MCF 10A (cell line): ENCODE measurements at regions of chr10 and their contacts with region 1.

Region 1: DNA sequence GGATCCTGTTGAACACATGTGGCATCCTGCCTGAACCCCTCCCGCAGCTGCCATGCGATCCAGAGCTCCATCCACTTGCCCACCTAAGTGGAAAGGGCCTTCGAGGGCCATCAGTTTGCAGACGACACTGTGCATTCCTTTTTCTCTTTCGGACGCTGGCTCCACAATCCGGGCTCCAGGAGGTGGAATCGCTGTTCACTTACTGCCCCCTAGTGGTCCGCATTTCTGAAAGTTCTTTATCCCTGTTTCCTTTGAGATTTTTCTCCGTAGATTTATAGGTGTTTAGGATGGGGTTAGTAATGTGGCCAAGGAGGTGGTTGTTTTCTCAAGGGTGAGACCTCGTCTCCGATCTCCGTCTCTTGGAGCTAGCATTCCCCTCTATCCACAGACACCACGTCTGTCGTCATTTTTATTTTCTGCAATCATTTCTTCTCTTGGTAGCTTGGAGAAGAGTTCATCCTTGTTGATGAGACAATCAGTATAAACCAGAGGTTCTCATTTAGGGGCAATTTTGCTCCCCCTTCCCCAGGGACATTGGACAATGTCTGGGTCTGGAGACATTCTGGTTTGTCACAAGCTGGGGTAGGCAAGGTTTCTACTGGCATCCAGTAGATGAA is 204.6 kb downstream of the ARHGAP21 start:
- DNase-seq: peak; percentile 65
- H3K4me3 Mint-ChIP-seq: no peak overlapping the region
- H3K27ac Mint-ChIP-seq: no peak overlapping the region
- H3K4me1 Mint-ChIP-seq: peaks cover 7% of the 10 kb centered on the region
- H3K27me3 Mint-ChIP-seq: no peaks in the 10 kb centered on the region
- CTCF ChIP-seq: peak; percentile 56

Region 2: GRCh38 chr10:24238519-24239252 is 280.4 kb before region 1 on chr10:
- CTCF ChIA-PET with region 1: interaction called, 3 read pairs
- POLR2A ChIA-PET with region 1: interaction called, 3 read pairs
- intact Hi-C with region 1: loop called (anchors 10 kb)
- DNase-seq: peak; percentile 67
- H3K4me3 Mint-ChIP-seq: peak overlapping the region; percentile 63
- H3K27ac Mint-ChIP-seq: no peak overlapping the region
- H3K4me1 Mint-ChIP-seq: peaks cover 19% of the 10 kb centered on the region
- H3K27me3 Mint-ChIP-seq: peaks cover 13% of the 10 kb centered on the region
- CTCF ChIP-seq: no peak

Region 3: GRCh38 chr10:24333736-24334135 is 185.4 kb before region 1 on chr10:
- CTCF ChIA-PET with region 1: no interaction called
- POLR2A ChIA-PET with region 1: no interaction called
- intact Hi-C with region 1: no loop called
- DNase-seq: no peak
- H3K4me3 Mint-ChIP-seq: no peak overlapping the region
- H3K27ac Mint-ChIP-seq: peak overlapping the region; percentile 37
- H3K4me1 Mint-ChIP-seq: peaks cover 29% of the 10 kb centered on the region
- H3K27me3 Mint-ChIP-seq: no peaks in the 10 kb centered on the region
- CTCF ChIP-seq: no peak

Region 4: GRCh38 chr10:24367688-24368087 is 151.4 kb before region 1 on chr10:
- CTCF ChIA-PET with region 1: interaction called, 22 read pairs
- POLR2A ChIA-PET with region 1: no interaction called
- intact Hi-C with region 1: loop called (anchors 5 kb)
- DNase-seq: no peak
- H3K4me3 Mint-ChIP-seq: no peak overlapping the region
- H3K27ac Mint-ChIP-seq: no peak overlapping the region
- H3K4me1 Mint-ChIP-seq: no peaks in the 10 kb centered on the region
- H3K27me3 Mint-ChIP-seq: no peaks in the 10 kb centered on the region
- CTCF ChIP-seq: no peak

Region 5: GRCh38 chr10:24415455-24416125 is 103.5 kb before region 1 on chr10:
- CTCF ChIA-PET with region 1: interaction called, 12 read pairs
- POLR2A ChIA-PET with region 1: no interaction called
- intact Hi-C with region 1: no loop called
- DNase-seq: peak; percentile 67
- H3K4me3 Mint-ChIP-seq: peak overlapping the region; percentile 25
- H3K27ac Mint-ChIP-seq: peak overlapping the region; percentile 96
- H3K4me1 Mint-ChIP-seq: peaks cover 23% of the 10 kb centered on the region
- H3K27me3 Mint-ChIP-seq: no peaks in the 10 kb centered on the region
- CTCF ChIP-seq: no peak

Region 6: GRCh38 chr10:24503461-24504320 is 15.4 kb before region 1 on chr10:
- CTCF ChIA-PET with region 1: interaction called, 108 read pairs
- POLR2A ChIA-PET with region 1: interaction called, 3 read pairs
- intact Hi-C with region 1: no loop called
- DNase-seq: peak; percentile 81
- H3K4me3 Mint-ChIP-seq: no peak overlapping the region
- H3K27ac Mint-ChIP-seq: peak overlapping the region; percentile 23
- H3K4me1 Mint-ChIP-seq: no peaks in the 10 kb centered on the region
- H3K27me3 Mint-ChIP-seq: no peaks in the 10 kb centered on the region
- CTCF ChIP-seq: peak; percentile 86

Region 7: GRCh38 chr10:24603333-24603732 is 84.2 kb after region 1 on chr10:
- CTCF ChIA-PET with region 1: no interaction called
- POLR2A ChIA-PET with region 1: no interaction called
- intact Hi-C with region 1: no loop called
- DNase-seq: peak; percentile 34
- H3K4me3 Mint-ChIP-seq: no peak overlapping the region
- H3K27ac Mint-ChIP-seq: peak overlapping the region; percentile 78
- H3K4me1 Mint-ChIP-seq: peaks cover 9% of the 10 kb centered on the region
- H3K27me3 Mint-ChIP-seq: no peaks in the 10 kb centered on the region
- CTCF ChIP-seq: no peak